ENCODE measurements at regions of chr5 and their contacts with region 1.

Region 1: GRCh38 chr5:125582352-125582751 is 835.9 kb upstream of the ZNF608 start:
- DNase-seq: no peak

Region 2: DNA sequence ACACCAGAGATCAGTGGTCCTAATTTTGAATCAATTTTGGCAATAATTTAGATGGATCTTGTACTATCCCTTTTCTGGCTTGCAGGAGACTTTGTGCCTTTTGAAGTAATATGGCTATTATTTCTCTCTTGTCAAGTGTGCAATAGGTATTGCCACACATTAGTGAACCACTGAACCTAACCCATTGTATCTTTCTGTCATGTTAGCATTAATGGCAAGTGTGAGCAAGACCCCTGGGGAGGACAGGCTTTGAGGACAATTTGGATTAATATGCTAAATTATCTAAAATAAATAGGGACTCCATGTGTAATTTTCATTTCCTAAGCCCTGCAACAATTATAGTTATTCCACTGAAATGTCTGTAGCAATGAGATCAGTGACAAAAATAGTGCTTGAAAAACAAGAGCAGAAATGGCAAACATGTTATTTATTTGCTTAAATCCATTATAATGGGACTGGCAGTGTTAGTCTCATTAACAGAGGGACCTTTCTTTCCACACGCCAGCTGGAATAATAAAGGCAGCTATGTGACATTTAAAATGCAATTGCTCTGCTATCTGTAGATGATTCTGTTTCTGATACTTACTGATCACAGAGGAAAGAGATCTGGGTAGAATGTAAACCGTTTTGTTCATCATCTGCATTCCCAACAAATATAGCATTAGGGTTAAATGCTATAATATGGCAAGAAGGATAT is 82.6 kb before region 1 on chr5:
- intact Hi-C with region 1: no loop called
- DNase-seq: no peak

Region 3: DNA sequence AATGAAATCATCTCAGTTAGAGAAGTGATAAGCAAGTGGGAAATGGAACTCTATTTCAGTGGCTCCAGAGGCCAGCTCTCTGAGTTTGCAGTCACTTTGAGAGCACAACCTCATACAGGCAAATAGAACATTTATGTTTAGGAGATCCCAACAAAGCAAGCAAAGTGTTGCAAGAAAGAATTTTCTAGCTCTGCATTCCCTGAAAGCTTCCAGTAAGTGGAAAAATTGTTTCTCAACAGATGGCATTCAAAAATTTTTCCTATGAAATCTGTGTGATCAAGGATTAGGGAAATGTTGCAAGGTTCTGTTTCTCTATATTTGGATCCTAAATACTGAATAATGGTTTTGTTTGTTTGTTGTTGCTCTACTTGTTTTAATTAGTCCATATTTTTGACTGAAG is 71.7 kb before region 1 on chr5:
- intact Hi-C with region 1: loop called in 1 of 2 experiments (anchors 2 kb)
- DNase-seq: no peak

Region 4: DNA sequence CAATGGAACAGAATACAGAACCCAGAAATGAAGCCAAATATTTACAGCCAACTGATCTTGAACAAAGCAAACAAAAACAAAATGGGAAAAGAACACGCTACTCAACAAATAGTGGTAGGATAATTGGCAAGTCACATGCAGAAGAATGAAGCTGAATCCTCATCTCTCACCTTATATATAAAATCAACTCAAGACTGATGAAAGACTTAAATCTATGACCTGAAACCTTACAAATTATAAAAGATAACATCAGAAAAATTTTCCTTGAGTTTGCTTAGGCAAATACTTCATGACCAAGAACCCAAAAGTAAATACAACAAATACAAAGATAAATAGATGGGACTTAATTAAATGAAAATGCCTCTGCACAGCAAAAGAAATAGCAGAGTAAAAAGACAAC is 64.7 kb after region 1 on chr5:
- intact Hi-C with region 1: no loop called
- DNase-seq: no peak

Measured in posterior vena cava (tissue), 2 donors.